Activated T-helper 2 cell treated with anti-CD3 and anti-CD28 coated beads, Interferon-gamma antibody, Interleukin-2, Interleukin-4, amounts not matched to agents 10 μg/mL and 5 μg/mL and 100 μg/mL, durations not matched to agents 14 hours and 24 hours and 36 hours (primary cell): ENCODE measurements at regions of chr12 and their contacts with region 1.

Region 1: GRCh38 chr12:104381731-104382480 is 74.8 kb upstream of the CHST11 start:
- DNase-seq: peak; percentile 63
- H3K4me3 Mint-ChIP-seq: no peak overlapping the region
- H3K27ac Mint-ChIP-seq: no peak overlapping the region
- H3K4me1 Mint-ChIP-seq: peaks cover 13% of the 10 kb centered on the region
- H3K27me3 Mint-ChIP-seq: peaks cover 9% of the 10 kb centered on the region

Region 2: DNA sequence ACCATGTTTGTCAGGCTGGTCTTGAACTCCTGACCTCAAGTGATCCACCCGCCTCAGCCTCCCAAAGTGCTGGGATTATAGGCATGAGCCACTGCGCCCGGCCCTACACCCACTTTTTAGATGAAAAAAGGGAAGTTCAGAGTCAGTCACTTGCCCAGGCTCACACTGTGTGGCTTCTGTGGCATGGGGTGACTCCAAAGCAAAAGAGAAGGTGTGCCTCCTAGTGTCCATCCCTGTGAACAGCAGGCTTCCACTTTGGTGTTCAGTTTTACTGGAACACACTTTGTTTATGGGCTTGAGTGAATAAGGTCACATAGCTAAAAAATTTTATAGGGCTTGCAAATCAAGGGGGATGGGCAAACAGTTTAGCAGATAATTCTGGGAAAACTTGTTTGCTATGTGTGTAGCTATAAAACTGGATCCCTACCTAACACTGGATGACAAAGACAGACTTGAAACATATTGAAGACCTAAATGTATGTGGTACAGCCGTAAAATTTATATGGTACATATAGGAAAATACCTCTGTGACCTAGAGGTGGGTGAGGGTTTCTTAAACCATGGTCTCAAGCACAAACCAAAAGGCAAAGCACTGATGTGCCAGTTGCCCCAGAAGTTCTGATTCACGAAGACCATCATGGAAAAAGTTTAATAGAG is 23.4 kb before region 1 on chr12:
- intact Hi-C with region 1: no loop called
- DNase-seq: peak; percentile 60
- H3K4me3 Mint-ChIP-seq: no peak overlapping the region
- H3K27ac Mint-ChIP-seq: no peak overlapping the region
- H3K4me1 Mint-ChIP-seq: peaks cover 8% of the 10 kb centered on the region
- H3K27me3 Mint-ChIP-seq: no peaks in the 10 kb centered on the region

Region 3: DNA sequence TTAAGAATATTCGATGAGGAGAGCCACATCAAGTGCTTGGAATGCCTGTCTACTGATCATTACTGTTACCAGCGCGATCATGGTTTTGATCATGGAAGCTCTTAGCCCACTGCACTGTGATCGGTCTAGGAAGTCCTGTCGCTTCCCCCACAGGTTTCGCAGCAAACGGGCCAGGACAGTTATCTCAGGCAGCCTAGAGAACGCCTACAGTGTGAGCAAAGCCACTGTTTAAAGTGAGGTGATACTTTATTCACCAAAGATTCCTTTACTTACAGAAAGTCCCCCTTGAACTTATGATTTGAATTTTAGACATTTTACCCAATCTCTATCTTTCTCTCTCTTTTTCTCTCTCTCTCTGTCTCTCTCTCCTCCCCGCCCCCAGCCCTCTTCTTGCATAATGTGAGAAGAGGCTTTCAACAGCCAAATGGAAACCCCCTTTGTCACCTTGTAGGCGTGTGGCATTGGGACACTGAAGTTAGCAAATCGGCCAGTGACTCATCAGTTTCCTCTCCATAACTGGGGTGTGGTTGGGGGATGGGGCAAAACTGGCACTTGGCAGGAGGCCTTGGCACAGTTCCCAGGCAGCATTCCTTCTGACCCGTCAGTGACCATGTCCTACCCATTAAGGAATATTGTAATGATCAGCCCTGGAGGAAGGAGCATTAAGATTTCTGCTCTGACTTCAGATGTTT is 289.6 kb after region 1 on chr12:
- intact Hi-C with region 1: loop called (anchors 5 kb)
- DNase-seq: peak; percentile 54
- H3K4me3 Mint-ChIP-seq: peak overlapping the region; percentile 45
- H3K27ac Mint-ChIP-seq: peak overlapping the region; percentile 89
- H3K4me1 Mint-ChIP-seq: peaks cover 55% of the 10 kb centered on the region
- H3K27me3 Mint-ChIP-seq: no peaks in the 10 kb centered on the region

Region 4: GRCh38 chr12:104720339-104721038 is 338.6 kb after region 1 on chr12:
- intact Hi-C with region 1: loop called (anchors 5 kb)
- DNase-seq: peak; percentile 67
- H3K4me3 Mint-ChIP-seq: peak overlapping the region; percentile 76
- H3K27ac Mint-ChIP-seq: peak overlapping the region; percentile 94
- H3K4me1 Mint-ChIP-seq: peaks cover 47% of the 10 kb centered on the region
- H3K27me3 Mint-ChIP-seq: no peaks in the 10 kb centered on the region

Region 5: DNA sequence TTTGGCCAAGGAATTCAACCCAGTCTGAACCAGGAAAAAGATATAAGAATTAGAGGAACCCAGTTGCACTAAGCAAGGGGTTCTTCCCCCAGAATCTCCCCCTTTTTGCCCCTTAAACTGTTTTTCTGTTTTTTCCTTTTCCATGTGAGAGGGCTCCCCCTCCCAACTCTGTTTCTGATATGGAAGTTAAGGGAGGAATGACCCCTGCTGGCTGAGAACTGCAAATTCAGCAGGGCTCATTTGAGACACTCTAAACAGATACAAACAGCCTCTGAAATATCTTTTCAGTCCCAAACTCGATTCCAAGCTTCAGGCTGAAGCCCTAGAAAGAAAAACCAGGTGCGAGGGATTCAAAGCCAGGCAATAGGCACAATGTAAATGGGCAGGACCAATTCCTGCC is 443.5 kb after region 1 on chr12:
- intact Hi-C with region 1: loop called (anchors 5 kb)
- DNase-seq: no peak
- H3K4me3 Mint-ChIP-seq: no peak overlapping the region
- H3K27ac Mint-ChIP-seq: no peak overlapping the region
- H3K4me1 Mint-ChIP-seq: no peaks in the 10 kb centered on the region
- H3K27me3 Mint-ChIP-seq: no peaks in the 10 kb centered on the region

Region 6: DNA sequence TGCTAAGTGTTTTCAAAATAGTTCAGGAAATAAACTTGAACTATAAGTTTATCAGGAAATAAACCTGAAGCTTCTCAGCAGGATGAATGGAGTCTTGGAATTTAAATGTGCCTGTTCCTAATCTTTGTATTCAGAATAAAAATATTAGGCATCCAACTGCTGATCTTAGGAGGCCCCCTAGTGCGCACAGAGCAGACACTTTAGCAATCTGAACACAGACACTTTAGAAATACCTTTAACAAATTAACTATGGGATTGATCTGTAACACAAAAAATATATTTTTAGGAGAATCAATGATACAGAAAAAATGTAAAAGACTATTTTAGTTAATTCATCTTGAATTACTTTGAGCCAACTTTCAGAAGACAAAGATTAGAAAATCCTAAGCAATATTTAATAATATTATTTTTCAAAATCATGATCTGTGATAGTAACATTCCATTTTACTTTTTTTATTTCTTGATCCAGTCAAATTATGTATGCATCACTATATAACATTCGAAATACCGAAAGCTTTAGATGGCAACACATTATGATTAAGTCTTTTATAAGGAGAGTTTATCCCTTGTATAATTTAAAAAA is 495.3 kb after region 1 on chr12:
- intact Hi-C with region 1: loop called (anchors 5 kb)
- DNase-seq: no peak
- H3K4me3 Mint-ChIP-seq: no peak overlapping the region
- H3K27ac Mint-ChIP-seq: no peak overlapping the region
- H3K4me1 Mint-ChIP-seq: peaks cover 6% of the 10 kb centered on the region
- H3K27me3 Mint-ChIP-seq: peaks cover 25% of the 10 kb centered on the region